ENCODE measurements at regions of chr21 and their contacts with region 1.

Region 1: GRCh38 chr21:29073222-29074006 is at the start of gene CCT8:
- DNase-seq: peak; percentile 99
- H3K4me3 Mint-ChIP-seq: peak within 1 kb of the TSS; percentile 99
- H3K27ac Mint-ChIP-seq: peak within 1 kb of the TSS; percentile 98
- H3K4me1 Mint-ChIP-seq: peaks cover 43% of the 10 kb centered on the region
- H3K27me3 Mint-ChIP-seq: no peaks in the 10 kb centered on the region
- total RNA-seq, gene CCT8: 366 and 387 TPM in 2 replicates

Region 2: DNA sequence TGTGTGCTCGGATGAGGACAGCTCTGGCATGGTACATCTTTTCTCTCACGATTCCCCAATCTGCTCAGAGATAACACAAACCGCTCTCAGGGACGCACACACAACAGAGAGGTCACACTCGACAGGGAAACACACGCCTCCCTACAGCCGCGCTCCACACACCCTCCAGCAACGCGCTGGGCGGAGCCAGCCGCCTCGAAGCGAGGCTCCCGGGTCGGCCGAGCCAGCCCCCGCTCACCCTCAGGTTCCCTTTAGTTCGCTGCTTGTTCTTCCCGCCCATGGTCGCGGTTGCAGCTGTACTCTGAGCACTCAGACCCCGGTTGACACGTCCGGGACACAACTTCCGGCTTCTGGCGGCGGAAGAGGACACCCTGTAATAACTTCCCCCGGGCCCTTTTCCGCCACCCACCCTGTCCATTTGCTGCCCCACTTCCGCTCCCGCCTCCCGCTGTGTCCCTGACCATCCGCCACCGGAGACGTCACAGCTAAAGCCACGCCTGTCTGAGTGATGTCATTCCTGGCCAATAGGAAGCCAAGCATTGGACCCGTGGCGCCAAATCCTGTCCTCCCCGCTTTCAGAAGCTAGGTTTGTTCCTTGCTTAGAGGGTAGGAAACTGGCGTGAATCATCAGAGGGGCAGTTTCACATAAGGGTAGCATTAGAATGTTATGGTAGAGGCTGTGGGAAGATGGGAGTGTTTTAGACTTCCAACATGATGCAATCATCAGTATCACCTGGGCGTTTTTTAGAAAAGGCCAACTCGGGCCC is 80.7 kb before region 1 on chr21 and contains the start of gene LTN1:
- intact Hi-C with region 1: loop called (anchors 1 kb)
- DNase-seq: peak; percentile 99
- H3K4me3 Mint-ChIP-seq: peak within 1 kb of the TSS; percentile 95
- H3K27ac Mint-ChIP-seq: peak within 1 kb of the TSS; percentile 95
- H3K4me1 Mint-ChIP-seq: peaks cover 30% of the 10 kb centered on the region
- H3K27me3 Mint-ChIP-seq: no peaks in the 10 kb centered on the region
- total RNA-seq, gene LTN1: 24.9 and 27.5 TPM in 2 replicates

Region 3: DNA sequence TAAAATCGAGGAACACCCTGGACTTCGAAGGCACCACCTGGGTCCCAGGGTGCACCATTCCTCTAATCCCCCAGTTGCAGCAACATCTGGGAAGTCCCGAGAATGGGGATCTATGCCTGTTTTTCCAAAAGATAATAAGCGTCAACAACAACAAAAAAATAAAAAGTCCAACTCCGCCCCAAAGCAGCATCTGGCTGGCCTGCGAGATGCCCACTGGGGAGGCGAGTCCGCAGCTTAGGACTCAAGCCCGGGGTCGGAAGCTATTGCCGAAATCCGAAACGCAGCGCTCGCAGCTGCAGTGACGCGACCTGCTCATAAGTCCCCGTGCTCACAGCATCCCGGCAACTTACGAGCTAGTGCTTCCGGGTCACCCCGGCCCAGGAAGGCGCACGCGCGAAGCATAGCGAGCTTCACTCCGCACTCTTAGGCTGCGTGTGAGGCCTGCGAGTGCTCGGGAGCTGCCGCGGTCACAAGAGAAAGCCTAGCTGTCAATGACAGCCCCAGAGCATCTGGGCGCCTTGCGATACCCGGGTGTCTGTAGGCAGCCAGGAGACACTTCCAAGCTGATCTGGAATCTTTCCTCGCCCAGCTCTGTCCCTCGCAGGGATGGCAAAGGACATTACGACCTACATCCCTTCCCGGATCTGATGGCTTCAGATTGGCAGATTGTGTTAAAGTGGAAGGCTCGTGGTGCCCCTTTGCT is 70.8 kb before region 1 on chr21:
- intact Hi-C with region 1: loop called (anchors 1 kb)
- DNase-seq: peak; percentile 93
- H3K4me3 Mint-ChIP-seq: peak overlapping the region; percentile 86
- H3K27ac Mint-ChIP-seq: peak overlapping the region; percentile 93
- H3K4me1 Mint-ChIP-seq: peaks cover 2% of the 10 kb centered on the region
- H3K27me3 Mint-ChIP-seq: no peaks in the 10 kb centered on the region

Region 4: DNA sequence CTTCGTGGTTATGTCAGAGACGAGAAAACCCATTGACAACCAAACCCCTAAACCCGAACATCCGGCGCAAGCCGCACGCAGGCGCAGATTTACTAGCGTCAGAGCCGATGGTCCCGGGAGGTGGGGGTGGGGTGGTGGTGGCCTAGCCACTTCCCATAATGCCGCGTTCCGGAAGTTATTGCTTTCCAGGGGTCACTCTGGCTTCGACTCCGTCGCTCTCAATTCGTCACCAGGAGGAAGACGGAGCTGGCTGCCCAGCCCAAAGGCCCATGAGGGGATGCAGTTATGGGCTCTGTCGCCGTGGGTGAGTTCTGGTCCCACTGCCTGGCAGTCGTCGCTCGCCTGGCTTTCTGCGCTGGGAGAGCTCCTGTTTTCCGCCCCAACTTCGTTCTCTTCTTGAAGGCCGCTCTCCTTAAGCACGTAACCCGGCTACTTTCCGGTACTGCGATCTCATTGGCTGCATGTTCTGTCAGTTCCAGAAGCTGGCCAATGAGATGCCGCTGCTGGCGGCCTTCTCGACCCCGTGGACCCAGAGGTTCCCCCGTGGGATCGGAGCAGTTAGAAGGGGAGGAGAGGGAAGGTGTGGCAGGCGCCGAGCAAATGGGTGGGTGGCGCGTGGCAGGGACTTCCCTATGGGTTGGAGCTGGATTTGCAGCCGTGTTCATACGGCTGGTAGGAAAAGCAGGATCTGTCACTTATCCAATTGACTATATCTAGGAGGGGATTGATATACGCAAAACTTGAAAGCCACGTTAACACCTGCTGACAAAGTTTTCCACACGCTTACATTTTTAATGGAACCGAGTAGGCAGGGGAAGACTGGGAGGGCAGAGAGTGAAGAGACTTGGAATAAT is 48.7 kb before region 1 on chr21 and contains the start of gene USP16:
- intact Hi-C with region 1: loop called (anchors 1 kb)
- DNase-seq: peak; percentile 96
- H3K4me3 Mint-ChIP-seq: peak within 1 kb of the TSS; percentile 96
- H3K27ac Mint-ChIP-seq: peak within 1 kb of the TSS; percentile 99
- H3K4me1 Mint-ChIP-seq: peaks cover 28% of the 10 kb centered on the region
- H3K27me3 Mint-ChIP-seq: no peaks in the 10 kb centered on the region
- total RNA-seq, gene USP16: 40.9 and 44.1 TPM in 2 replicates